Activated B cell treated with CpG ODN at 0.5 μM for 24 hours (primary cell): ENCODE measurements at regions of chr3 and their contacts with region 1.

Region 1: GRCh38 chr3:71305231-71306206 is 278.0 kb downstream of the FOXP1 start:
- DNase-seq: no peak
- ATAC-seq: peak; percentile 38
- H3K4me3 Mint-ChIP-seq: peak overlapping the region; percentile 92
- H3K27ac Mint-ChIP-seq: peak overlapping the region; percentile 94
- H3K4me1 Mint-ChIP-seq: peaks cover 79% of the 10 kb centered on the region
- H3K27me3 Mint-ChIP-seq: no peaks in the 10 kb centered on the region
- CTCF ChIP-seq: no peak

Region 2: GRCh38 chr3:70064194-70064779 is 1241.2 kb before region 1 on chr3:
- CTCF ChIA-PET with region 1: no interaction called
- POLR2A ChIA-PET with region 1: no interaction called
- intact Hi-C with region 1: loop called (anchors 5 kb)
- DNase-seq: no peak
- ATAC-seq: no peak
- H3K4me3 Mint-ChIP-seq: no peak overlapping the region
- H3K27ac Mint-ChIP-seq: no peak overlapping the region
- H3K4me1 Mint-ChIP-seq: no peaks in the 10 kb centered on the region
- H3K27me3 Mint-ChIP-seq: peaks cover 2% of the 10 kb centered on the region
- CTCF ChIP-seq: peak; percentile 79

Region 3: GRCh38 chr3:71006810-71007785 is 298.4 kb before region 1 on chr3:
- CTCF ChIA-PET with region 1: interaction called, 4 read pairs
- POLR2A ChIA-PET with region 1: interaction called, 5 read pairs
- intact Hi-C with region 1: loop called (anchors 1 kb)
- DNase-seq: no peak
- ATAC-seq: peak; percentile 35
- H3K4me3 Mint-ChIP-seq: no peak overlapping the region
- H3K27ac Mint-ChIP-seq: peak overlapping the region; percentile 84
- H3K4me1 Mint-ChIP-seq: peaks cover 73% of the 10 kb centered on the region
- H3K27me3 Mint-ChIP-seq: no peaks in the 10 kb centered on the region
- CTCF ChIP-seq: peak; percentile 75

Region 4: GRCh38 chr3:71087143-71088018 is 218.1 kb before region 1 on chr3:
- CTCF ChIA-PET with region 1: no interaction called
- POLR2A ChIA-PET with region 1: interaction called, 69 read pairs
- intact Hi-C with region 1: no loop called
- DNase-seq: no peak
- ATAC-seq: peak; percentile 56
- H3K4me3 Mint-ChIP-seq: peak overlapping the region; percentile 54
- H3K27ac Mint-ChIP-seq: peak overlapping the region; percentile 99
- H3K4me1 Mint-ChIP-seq: peaks cover 97% of the 10 kb centered on the region
- H3K27me3 Mint-ChIP-seq: no peaks in the 10 kb centered on the region
- CTCF ChIP-seq: no peak

Region 5: GRCh38 chr3:71360764-71361163 is 55.2 kb after region 1 on chr3:
- CTCF ChIA-PET with region 1: no interaction called
- POLR2A ChIA-PET with region 1: interaction called, 3 read pairs
- intact Hi-C with region 1: loop called (anchors 2 kb)
- DNase-seq: no peak
- ATAC-seq: peak; percentile 62
- H3K4me3 Mint-ChIP-seq: peak overlapping the region; percentile 81
- H3K27ac Mint-ChIP-seq: peak overlapping the region; percentile 93
- H3K4me1 Mint-ChIP-seq: peaks cover 88% of the 10 kb centered on the region
- H3K27me3 Mint-ChIP-seq: no peaks in the 10 kb centered on the region
- CTCF ChIP-seq: no peak

Region 6: GRCh38 chr3:71512000-71512399 is 206.5 kb after region 1 on chr3:
- CTCF ChIA-PET with region 1: interaction called, 8 read pairs
- POLR2A ChIA-PET with region 1: no interaction called
- intact Hi-C with region 1: loop called (anchors 1 kb)
- DNase-seq: no peak
- ATAC-seq: peak; percentile 97
- H3K4me3 Mint-ChIP-seq: peak overlapping the region; percentile 5
- H3K27ac Mint-ChIP-seq: no peak overlapping the region
- H3K4me1 Mint-ChIP-seq: peaks cover 22% of the 10 kb centered on the region
- H3K27me3 Mint-ChIP-seq: no peaks in the 10 kb centered on the region
- CTCF ChIP-seq: no peak